Heart right ventricle (tissue), 16 donors: ENCODE measurements at regions of chr18 and their contacts with region 1.

Region 1: GRCh38 chr18:70907673-70908072 is 618.8 kb downstream of the SOCS6 start:
- DNase-seq: no peak
- ATAC-seq: no peak
- H3K4me3 ChIP-seq: no peak overlapping the region
- H3K27ac ChIP-seq: no peak overlapping the region
- H3K4me1 ChIP-seq: no peaks in the 10 kb centered on the region
- H3K27me3 ChIP-seq: no peaks in the 10 kb centered on the region
- CTCF ChIP-seq: no peak

Region 2: GRCh38 chr18:70840649-70841048 is 67.0 kb before region 1 on chr18:
- intact Hi-C with region 1: loop called in 1 of 10 experiments (anchors 10 kb)
- DNase-seq: no peak
- ATAC-seq: no peak
- H3K4me3 ChIP-seq: no peak overlapping the region
- H3K27ac ChIP-seq: no peak overlapping the region
- H3K4me1 ChIP-seq: no peaks in the 10 kb centered on the region
- H3K27me3 ChIP-seq: no peaks in the 10 kb centered on the region
- CTCF ChIP-seq: no peak